ENCODE measurements at regions of chr2 and their contacts with region 1.

Region 1: GRCh38 chr2:147910990-147911473 is 66.2 kb downstream of the ACVR2A start:
- H3K4me3 Mint-ChIP-seq: no peak overlapping the region
- H3K27ac Mint-ChIP-seq: no peak overlapping the region
- H3K4me1 Mint-ChIP-seq: peaks cover 13% of the 10 kb centered on the region
- H3K27me3 Mint-ChIP-seq: no peaks in the 10 kb centered on the region

Region 2: GRCh38 chr2:146734042-146734820 is 1176.8 kb before region 1 on chr2:
- intact Hi-C with region 1: loop called (anchors 10 kb)
- H3K4me3 Mint-ChIP-seq: no peak overlapping the region
- H3K27ac Mint-ChIP-seq: no peak overlapping the region
- H3K4me1 Mint-ChIP-seq: no peaks in the 10 kb centered on the region
- H3K27me3 Mint-ChIP-seq: no peaks in the 10 kb centered on the region

Region 3: GRCh38 chr2:147045113-147045512 is 865.9 kb before region 1 on chr2:
- intact Hi-C with region 1: loop called (anchors 2 kb)
- H3K4me3 Mint-ChIP-seq: no peak overlapping the region
- H3K27ac Mint-ChIP-seq: no peak overlapping the region
- H3K4me1 Mint-ChIP-seq: peaks cover 5% of the 10 kb centered on the region
- H3K27me3 Mint-ChIP-seq: no peaks in the 10 kb centered on the region

Region 4: GRCh38 chr2:147083664-147084063 is 827.4 kb before region 1 on chr2:
- intact Hi-C with region 1: loop called (anchors 1 kb)
- H3K4me3 Mint-ChIP-seq: no peak overlapping the region
- H3K27ac Mint-ChIP-seq: no peak overlapping the region
- H3K4me1 Mint-ChIP-seq: no peaks in the 10 kb centered on the region
- H3K27me3 Mint-ChIP-seq: no peaks in the 10 kb centered on the region

Region 5: GRCh38 chr2:147867050-147867449 is 44.0 kb before region 1 on chr2:
- intact Hi-C with region 1: no loop called
- H3K4me3 Mint-ChIP-seq: no peak overlapping the region
- H3K27ac Mint-ChIP-seq: no peak overlapping the region
- H3K4me1 Mint-ChIP-seq: peaks cover 17% of the 10 kb centered on the region
- H3K27me3 Mint-ChIP-seq: no peaks in the 10 kb centered on the region

Measured in dendritic cell treated with granulocyte-macrophage colony-stimulating factor and Interleukin-4, amounts not matched to agents 40 ng/mL and 50 ng/mL, for 4 days (primary cell).